K562 (cell line): ENCODE measurements at regions of chr10 and their contacts with region 1.

Region 1: DNA sequence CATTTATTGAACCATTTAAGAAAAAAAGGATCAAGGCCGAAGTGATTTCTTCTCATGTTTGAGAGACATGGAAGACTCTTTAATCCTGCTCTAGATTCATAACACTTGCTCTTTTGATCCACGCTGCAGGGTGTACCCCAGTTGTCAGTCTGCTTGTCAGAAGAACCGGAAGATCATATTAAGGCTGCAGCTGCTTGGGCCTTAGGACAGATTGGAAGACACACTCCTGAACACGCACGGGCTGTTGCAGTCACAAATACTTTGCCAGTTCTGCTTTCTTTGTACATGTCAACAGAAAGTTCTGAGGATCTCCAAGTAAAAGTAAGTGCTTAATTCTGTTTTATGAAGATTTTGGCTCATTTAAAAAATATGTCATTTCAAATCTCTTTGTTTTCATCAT is 46.3 kb downstream of the SPAG6 start:
- DNase-seq: peak in 2 of 4 experiments; percentile 38 to 85
- ATAC-seq: peak; percentile 83
- H3K4me3 ChIP-seq: peak overlapping the region; percentile 34
- H3K27ac ChIP-seq: peak overlapping the region; percentile 58
- H3K4me1 ChIP-seq: peaks cover 0 to 21% of the 10 kb centered on the region in 2 experiments; a peak in 2 of 5 replicates
- H3K27me3 ChIP-seq: no peaks in the 10 kb centered on the region
- CTCF ChIP-seq: no peak
- EP300 ChIP-seq: peak; percentile 33; the same call in 1 of the 2 replicates
- POLR2A ChIP-seq: no peak; the same call in 1 of the 2 replicates
- RAD21 ChIP-seq: no peak

Region 2: DNA sequence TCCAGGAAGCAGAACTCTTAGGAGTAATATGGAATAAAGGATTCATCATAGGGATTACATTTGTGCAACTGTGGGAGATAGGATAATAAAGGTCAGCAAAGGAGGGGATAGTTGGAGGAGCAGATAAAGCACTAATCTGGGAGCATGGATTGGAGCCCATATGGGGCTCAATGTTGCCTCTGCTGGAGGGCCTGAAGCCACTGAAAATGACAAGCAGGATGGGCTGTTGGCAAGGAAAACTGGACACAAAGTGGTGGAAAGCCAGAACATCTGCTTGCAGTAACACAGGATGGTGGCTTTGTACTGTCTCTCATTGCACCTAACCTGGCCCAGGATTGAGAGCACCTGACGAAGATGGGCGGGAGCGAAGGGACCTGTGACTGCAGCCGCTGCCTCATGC is 90.4 kb before region 1 on chr10:
- CTCF ChIA-PET with region 1: no interaction called
- POLR2A ChIA-PET with region 1: no interaction called
- in situ Hi-C with region 1: no loop called
- intact Hi-C with region 1: no loop called
- DNase-seq: peak in 1 of 4 experiments; percentile 25
- ATAC-seq: peak; percentile 71
- H3K4me3 ChIP-seq: no peak overlapping the region
- H3K27ac ChIP-seq: no peak overlapping the region
- H3K4me1 ChIP-seq: no peaks in the 10 kb centered on the region; a peak in 1 of 5 replicates
- H3K27me3 ChIP-seq: no peaks in the 10 kb centered on the region
- CTCF ChIP-seq: peak; percentile 16 to 30 (median 18); a peak in 1 of 6 replicates
- EP300 ChIP-seq: no peak
- POLR2A ChIP-seq: no peak
- RAD21 ChIP-seq: 0 out of 4 replicates have a peak, but pooled peaks of 1 of the 2 experiments have one; percentile 21

Region 3: DNA sequence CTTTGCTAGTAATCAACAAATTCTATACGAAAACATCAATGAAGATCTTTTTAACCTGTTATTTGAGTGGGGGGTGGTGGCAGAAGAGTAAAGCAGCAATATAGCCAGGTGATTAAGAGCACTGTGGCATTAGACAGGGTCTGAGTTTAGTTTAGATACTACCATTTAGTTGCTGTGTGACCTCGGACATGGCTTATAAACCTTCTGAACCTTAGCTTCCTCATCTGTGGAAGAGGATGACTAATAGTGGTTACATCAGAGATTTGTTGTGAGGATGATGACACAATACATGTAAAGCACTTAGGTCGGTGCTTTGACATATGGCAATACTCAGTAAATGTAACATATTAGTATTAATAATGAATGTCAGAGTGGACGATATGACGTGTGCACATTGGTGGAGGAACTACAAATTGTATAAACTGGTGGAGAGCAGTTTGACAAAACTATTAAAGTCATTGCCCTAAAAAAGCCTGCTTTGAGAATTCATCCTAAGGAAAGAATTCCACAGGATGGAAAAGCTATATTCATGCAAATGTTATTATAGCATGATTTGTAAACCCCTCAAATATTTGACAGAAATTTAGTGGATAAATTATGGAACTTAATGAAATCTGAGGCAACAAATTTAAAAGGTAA is 22.0 kb before region 1 on chr10:
- CTCF ChIA-PET with region 1: no interaction called
- POLR2A ChIA-PET with region 1: interaction called, 4 read pairs
- in situ Hi-C with region 1: no loop called
- intact Hi-C with region 1: loop called (anchors 2 kb)
- DNase-seq: peak in 2 of 4 experiments; percentile 37 to 62
- ATAC-seq: peak; percentile 85
- H3K4me3 ChIP-seq: no peak overlapping the region
- H3K27ac ChIP-seq: peak overlapping the region; percentile 52
- H3K4me1 ChIP-seq: peaks cover 4 to 23% of the 10 kb centered on the region in 2 experiments
- H3K27me3 ChIP-seq: no peaks in the 10 kb centered on the region
- CTCF ChIP-seq: no peak
- EP300 ChIP-seq: 0 out of 2 replicates have a peak, but pooled peaks have one; percentile 9
- POLR2A ChIP-seq: no peak
- RAD21 ChIP-seq: no peak